Colonic mucosa (tissue), 4 donors: ENCODE measurements at regions of chr2 and their contacts with region 1.

Region 1: GRCh38 chr2:64562148-64562784 is 38.1 kb downstream of the AFTPH start:
- DNase-seq: no peak
- H3K4me3 ChIP-seq: no peak overlapping the region
- H3K27ac ChIP-seq: no peak overlapping the region
- H3K4me1 ChIP-seq: no peaks in the 10 kb centered on the region
- H3K27me3 ChIP-seq: no peaks in the 10 kb centered on the region
- CTCF ChIP-seq: peak; percentile 34

Region 2: DNA sequence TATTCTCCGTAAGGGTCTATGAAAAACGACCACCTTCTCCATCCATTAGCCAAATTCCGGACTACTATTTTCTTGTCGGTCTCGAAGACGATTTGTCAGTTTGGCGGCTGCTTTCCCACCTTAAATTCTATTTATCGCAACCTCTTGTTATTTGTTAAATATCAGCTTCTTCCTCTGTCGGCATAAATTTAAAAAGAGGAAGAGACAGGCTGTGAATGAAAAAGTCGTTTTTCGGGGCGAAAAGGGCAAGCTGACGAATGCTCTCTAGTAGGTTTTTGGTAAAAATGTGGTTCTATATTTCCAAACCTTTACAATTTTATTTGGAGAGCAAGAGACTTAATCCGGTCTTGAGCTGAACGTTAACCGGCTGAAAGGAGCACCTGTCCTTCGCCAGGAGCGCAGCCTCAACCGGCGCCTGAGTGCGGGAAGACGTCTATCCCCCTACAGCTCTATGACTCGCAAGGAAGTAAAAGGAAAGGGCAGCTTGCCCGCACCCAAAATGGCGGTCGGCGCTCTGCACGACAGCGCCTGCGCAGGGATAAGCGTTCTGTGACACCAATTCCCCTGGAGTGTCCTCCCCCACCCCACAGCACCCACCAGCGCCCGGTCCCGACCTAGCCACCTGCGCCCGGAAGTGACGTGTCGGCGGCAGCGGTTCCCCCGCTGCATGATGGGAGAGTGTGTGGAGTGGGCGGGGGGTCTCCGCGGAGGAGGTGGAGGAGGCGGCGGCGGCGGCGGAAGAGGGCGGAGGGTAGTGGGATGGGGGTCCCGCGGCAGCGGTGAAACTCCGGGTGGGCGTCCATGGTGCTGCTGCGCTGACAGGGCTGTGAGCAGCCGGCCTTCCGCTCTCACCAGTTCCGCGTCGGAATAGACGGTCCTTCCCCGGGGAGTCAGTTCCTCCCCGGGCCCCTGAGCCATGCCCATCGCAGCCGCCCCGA is 38.3 kb before region 1 on chr2 and contains the start of gene AFTPH:
- intact Hi-C with region 1: loop called (anchors 5 kb)
- DNase-seq: peak; percentile 99
- H3K4me3 ChIP-seq: peak within 1 kb of the TSS; percentile 87
- H3K27ac ChIP-seq: peak within 1 kb of the TSS; percentile 99
- H3K4me1 ChIP-seq: peaks cover 5% of the 10 kb centered on the region
- H3K27me3 ChIP-seq: no peaks in the 10 kb centered on the region
- CTCF ChIP-seq: no peak
- total RNA-seq, gene AFTPH: 49.4 to 67.3 TPM

Region 3: DNA sequence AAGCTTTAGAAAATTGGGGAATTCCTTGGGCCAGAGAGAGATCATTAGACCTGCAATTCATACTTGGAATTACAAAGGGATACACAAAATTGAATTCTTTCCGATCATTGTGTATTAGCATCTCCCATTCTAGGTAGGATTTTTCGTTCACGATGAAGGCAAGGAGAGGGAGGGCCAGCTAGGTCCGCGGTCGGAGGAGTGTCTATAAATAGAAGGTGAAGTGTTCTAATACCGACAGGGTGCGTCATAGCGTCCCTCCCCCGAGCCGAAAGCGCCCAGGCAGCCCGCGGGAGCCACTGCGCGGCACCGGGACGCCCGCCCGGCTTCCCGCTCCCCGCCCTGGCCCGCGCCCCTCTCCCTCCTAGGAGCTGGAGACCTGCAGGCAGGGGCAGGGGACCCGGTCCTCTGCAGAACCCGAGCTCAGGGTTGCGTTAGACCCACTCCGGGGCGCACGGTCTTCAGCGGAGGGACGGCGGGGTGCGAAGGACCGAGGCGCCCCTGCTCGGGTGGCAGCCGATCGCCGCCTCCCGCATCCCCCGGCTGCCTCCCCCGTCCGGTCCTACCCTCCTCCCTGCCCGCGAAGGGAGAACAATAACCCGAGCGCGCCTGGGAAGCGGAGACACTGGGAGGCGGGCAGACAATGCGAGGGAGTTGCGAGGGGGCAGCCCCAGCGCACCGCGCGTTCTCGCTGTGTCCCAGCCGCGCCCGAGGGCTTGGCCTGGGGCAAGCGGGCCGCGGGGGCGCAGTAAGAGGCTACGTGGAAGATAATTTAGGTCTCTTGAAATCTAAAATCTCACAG is 205.6 kb after region 1 on chr2:
- intact Hi-C with region 1: no loop called
- DNase-seq: peak; percentile 90
- H3K4me3 ChIP-seq: peak overlapping the region; percentile 61
- H3K27ac ChIP-seq: peak overlapping the region; percentile 96
- H3K4me1 ChIP-seq: peaks cover 3% of the 10 kb centered on the region
- H3K27me3 ChIP-seq: no peaks in the 10 kb centered on the region
- CTCF ChIP-seq: no peak